Activated B cell treated with CpG ODN at 0.5 μM for 24 hours (primary cell): ENCODE measurements at regions of chr12 and their contacts with region 1.

Region 1: GRCh38 chr12:45215419-45216229 is at the start of gene ANO6:
- DNase-seq: peak; percentile 74
- ATAC-seq: peak; percentile 74
- H3K4me3 Mint-ChIP-seq: peak within 1 kb of the TSS; percentile 95
- H3K27ac Mint-ChIP-seq: peak within 1 kb of the TSS; percentile 90
- H3K4me1 Mint-ChIP-seq: peaks cover 45% of the 10 kb centered on the region
- H3K27me3 Mint-ChIP-seq: no peaks in the 10 kb centered on the region
- CTCF ChIP-seq: no peak
- total RNA-seq, gene ANO6: 14.8 and 16.3 TPM in 2 replicates

Region 2: GRCh38 chr12:43758728-43759563 is 1456.7 kb before region 1 on chr12 and contains the starts of genes IRAK4 and PUS7L:
- CTCF ChIA-PET with region 1: no interaction called
- POLR2A ChIA-PET with region 1: no interaction called
- intact Hi-C with region 1: loop called (anchors 2 kb)
- DNase-seq: peak; percentile 83
- ATAC-seq: peak; percentile 98
- H3K4me3 Mint-ChIP-seq: peak within 1 kb of the TSS; percentile 98
- H3K27ac Mint-ChIP-seq: peak within 1 kb of the TSS; percentile 97
- H3K4me1 Mint-ChIP-seq: peaks cover 68% of the 10 kb centered on the region
- H3K27me3 Mint-ChIP-seq: no peaks in the 10 kb centered on the region
- CTCF ChIP-seq: no peak
- total RNA-seq, gene IRAK4: 38.4 and 40.8 TPM in 2 replicates
- total RNA-seq, gene PUS7L: 16.1 and 19.9 TPM in 2 replicates

Region 3: DNA sequence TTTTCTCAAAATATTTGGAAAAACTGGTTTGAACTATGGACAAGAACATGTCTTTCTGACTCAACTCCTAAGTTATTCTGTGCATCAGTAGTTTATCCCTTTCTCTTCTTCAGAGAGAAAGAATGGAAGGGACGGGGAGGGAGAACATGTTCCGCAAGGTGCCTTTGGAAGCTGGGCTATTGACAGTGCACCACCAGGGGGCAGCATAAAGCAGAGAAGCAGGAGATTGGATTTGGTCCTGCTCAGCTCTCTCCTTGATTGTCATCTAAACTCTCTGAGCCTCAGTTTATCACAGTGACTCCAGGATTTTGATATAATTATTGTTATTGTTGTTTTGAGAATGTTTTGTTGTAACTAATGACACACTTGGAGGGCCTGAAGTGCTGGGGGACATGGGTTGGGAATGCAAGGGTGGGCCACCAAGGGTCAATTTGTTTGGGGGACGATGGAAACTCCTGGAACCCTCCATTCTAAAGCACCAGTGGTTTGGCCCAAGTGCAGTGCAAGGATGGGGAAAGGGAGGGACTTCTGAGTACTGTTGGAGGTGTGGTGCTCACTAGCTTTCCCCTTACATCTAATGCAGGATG is 45.1 kb before region 1 on chr12:
- CTCF ChIA-PET with region 1: no interaction called
- POLR2A ChIA-PET with region 1: no interaction called
- intact Hi-C with region 1: loop called (anchors 1 kb)
- DNase-seq: peak; percentile 49
- ATAC-seq: no peak
- H3K4me3 Mint-ChIP-seq: no peak overlapping the region
- H3K27ac Mint-ChIP-seq: no peak overlapping the region
- H3K4me1 Mint-ChIP-seq: no peaks in the 10 kb centered on the region
- H3K27me3 Mint-ChIP-seq: no peaks in the 10 kb centered on the region
- CTCF ChIP-seq: peak; percentile 73

Region 4: DNA sequence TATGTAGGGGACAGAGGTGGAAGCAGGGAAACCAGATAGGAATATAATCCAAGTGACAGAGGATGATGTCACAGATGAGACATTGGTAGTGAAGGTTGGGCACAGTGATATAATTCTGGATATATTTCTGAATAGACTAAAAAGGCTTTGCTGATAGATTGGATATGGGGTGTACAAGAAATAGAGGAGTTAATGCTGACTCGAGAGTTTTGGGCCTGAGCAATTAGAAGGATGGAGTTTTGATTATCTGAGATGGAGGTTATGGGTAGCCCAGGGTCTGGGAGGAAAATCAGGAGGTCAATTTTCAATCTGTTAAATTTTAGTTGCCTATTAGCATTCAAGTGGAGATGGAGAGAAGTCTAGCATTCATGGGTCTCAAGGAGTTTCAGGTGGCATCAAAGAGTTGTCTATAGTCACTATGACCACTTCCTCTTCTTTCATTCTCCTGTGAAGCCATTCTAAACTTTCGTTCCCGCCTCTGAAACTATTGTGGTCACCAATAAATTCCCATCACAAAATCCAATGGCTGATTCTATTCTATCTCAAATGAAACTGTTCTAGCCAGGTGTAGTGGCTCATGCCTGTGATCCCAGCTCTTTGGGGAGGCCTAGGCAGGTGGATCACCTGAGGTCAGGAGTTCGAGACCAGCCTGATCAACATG is 10.3 kb before region 1 on chr12:
- CTCF ChIA-PET with region 1: no interaction called
- POLR2A ChIA-PET with region 1: no interaction called
- intact Hi-C with region 1: loop called (anchors 1 kb)
- DNase-seq: no peak
- ATAC-seq: no peak
- H3K4me3 Mint-ChIP-seq: no peak overlapping the region
- H3K27ac Mint-ChIP-seq: no peak overlapping the region
- H3K4me1 Mint-ChIP-seq: peaks cover 12% of the 10 kb centered on the region
- H3K27me3 Mint-ChIP-seq: no peaks in the 10 kb centered on the region
- CTCF ChIP-seq: no peak

Region 5: GRCh38 chr12:45268672-45269411 is 53.2 kb after region 1 on chr12:
- CTCF ChIA-PET with region 1: interaction called, 3 read pairs
- POLR2A ChIA-PET with region 1: no interaction called
- intact Hi-C with region 1: loop called (anchors 5 kb)
- DNase-seq: no peak
- ATAC-seq: peak; percentile 18
- H3K4me3 Mint-ChIP-seq: no peak overlapping the region
- H3K27ac Mint-ChIP-seq: no peak overlapping the region
- H3K4me1 Mint-ChIP-seq: peaks cover 9% of the 10 kb centered on the region
- H3K27me3 Mint-ChIP-seq: no peaks in the 10 kb centered on the region
- CTCF ChIP-seq: no peak

Region 6: GRCh38 chr12:45309836-45310626 is 94.4 kb after region 1 on chr12:
- CTCF ChIA-PET with region 1: no interaction called
- POLR2A ChIA-PET with region 1: no interaction called
- intact Hi-C with region 1: no loop called
- DNase-seq: no peak
- ATAC-seq: no peak
- H3K4me3 Mint-ChIP-seq: no peak overlapping the region
- H3K27ac Mint-ChIP-seq: no peak overlapping the region
- H3K4me1 Mint-ChIP-seq: no peaks in the 10 kb centered on the region
- H3K27me3 Mint-ChIP-seq: no peaks in the 10 kb centered on the region
- CTCF ChIP-seq: no peak

Region 7: DNA sequence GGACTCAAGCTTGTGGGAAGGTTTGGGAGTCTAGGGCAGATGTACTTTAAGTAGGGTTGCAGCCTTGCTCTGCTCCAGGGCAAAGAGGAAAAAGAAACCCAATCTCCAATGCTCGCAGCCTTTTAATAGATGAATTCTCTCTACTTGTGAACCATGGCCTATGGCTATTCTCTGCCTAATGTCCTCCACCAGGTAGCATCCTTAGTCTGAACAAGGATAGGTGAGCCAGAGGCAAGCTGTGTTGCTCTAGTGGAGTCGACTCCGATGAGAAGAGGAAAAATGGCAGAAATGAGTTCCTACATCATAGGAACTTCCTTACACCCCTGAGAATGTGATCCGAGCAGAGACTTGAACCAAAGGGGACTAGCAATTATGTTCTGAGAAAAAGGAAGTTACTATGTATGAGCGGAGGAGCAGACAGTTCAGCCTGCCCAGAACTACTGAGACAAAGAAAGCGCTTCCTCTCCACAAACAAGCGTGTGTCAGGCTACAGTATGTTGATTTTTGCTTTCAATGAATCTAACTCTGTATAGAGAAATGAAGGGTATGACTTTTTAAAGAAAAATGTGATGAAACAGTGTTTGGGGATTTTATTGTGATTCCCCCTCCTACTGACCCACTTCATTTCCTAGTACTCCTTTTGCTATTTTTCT is 360.3 kb after region 1 on chr12:
- CTCF ChIA-PET with region 1: no interaction called
- POLR2A ChIA-PET with region 1: no interaction called
- intact Hi-C with region 1: loop called (anchors 10 kb)
- DNase-seq: no peak
- ATAC-seq: peak; percentile 76
- H3K4me3 Mint-ChIP-seq: peak overlapping the region; percentile 61
- H3K27ac Mint-ChIP-seq: peak overlapping the region; percentile 78
- H3K4me1 Mint-ChIP-seq: peaks cover 44% of the 10 kb centered on the region
- H3K27me3 Mint-ChIP-seq: no peaks in the 10 kb centered on the region
- CTCF ChIP-seq: no peak